Gastrocnemius medialis (tissue), 4 donors: ENCODE measurements at regions of chr14 and their contacts with region 1.

Region 1: DNA sequence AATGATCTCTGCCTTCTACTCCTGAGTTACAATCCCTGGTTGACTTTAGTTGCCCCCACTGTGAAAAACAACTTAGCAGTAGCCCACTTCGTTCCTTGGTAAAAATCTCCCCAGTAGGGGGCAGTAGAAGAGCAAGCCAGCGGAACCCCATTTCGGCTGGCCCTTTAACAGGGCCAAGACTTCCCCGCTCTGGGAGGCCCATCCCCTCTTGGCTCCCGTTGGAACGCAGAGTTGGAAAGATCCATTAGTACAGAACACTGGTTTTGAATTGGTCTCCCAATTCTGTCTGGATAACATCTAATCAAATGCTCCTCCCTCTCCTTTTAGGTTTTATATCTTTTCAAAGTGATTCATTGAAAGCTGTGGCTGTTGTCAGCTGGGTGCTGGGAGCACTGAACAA is 1133.3 kb downstream of the BCL11B start:
- DNase-seq: no peak
- ATAC-seq: no peak
- H3K4me3 ChIP-seq: no peak overlapping the region
- H3K27ac ChIP-seq: no peak overlapping the region
- H3K4me1 ChIP-seq: no peaks in the 10 kb centered on the region
- H3K27me3 ChIP-seq: peaks cover 0 to 18% (median 0%) of the 10 kb centered on the region in 3 donors
- CTCF ChIP-seq: peak in 1 of 5 experiments; percentile 35
- POLR2A ChIP-seq: no peak

Region 2: GRCh38 chr14:98059106-98059505 is 79.6 kb before region 1 on chr14:
- in situ Hi-C with region 1: no loop called
- intact Hi-C with region 1: no loop called
- DNase-seq: no peak
- ATAC-seq: no peak
- H3K4me3 ChIP-seq: no peak overlapping the region
- H3K27ac ChIP-seq: no peak overlapping the region
- H3K4me1 ChIP-seq: no peaks in the 10 kb centered on the region
- H3K27me3 ChIP-seq: no peaks in the 10 kb centered on the region
- CTCF ChIP-seq: no peak
- POLR2A ChIP-seq: no peak

Region 3: GRCh38 chr14:98198385-98198784 is 59.7 kb after region 1 on chr14:
- in situ Hi-C with region 1: no loop called
- intact Hi-C with region 1: no loop called
- DNase-seq: no peak
- ATAC-seq: no peak
- H3K4me3 ChIP-seq: no peak overlapping the region
- H3K27ac ChIP-seq: no peak overlapping the region
- H3K4me1 ChIP-seq: no peaks in the 10 kb centered on the region
- H3K27me3 ChIP-seq: no peaks in the 10 kb centered on the region
- CTCF ChIP-seq: no peak
- POLR2A ChIP-seq: no peak

Region 4: DNA sequence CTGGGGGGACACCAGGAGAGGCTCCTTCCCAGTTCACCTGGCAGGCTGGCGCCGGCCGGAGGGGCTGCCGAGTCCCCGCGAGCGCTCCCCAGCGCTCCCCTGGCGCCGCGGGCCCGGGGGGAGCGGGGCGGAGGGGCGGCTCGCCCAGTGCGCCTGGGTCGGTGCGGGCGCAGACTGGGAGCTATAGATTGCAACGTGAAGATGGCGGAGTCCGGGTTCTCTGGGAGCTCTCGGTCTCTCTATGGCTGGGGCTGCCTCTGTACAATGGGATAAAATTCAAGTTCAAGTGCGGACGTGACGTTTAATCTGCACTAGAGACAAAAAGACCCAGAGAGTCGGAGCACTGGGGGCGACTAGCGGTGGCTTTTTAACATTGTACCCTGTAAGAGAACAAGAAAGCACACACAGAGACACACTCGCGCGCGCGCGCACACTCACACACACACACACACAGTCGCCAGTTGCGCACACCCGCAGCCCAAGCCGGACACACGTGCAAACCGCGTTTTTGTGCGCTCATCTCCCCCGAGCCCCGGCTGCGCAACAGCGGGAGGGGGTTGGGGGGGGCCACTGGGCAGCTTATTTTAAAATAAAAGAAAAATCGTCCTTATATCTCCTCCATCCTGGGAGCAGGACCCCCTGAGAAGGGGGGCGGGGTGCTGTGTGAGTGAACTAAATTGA is 1133.4 kb after region 1 on chr14 and contains the start of gene BCL11B:
- in situ Hi-C with region 1: loop called in 1 of 4 experiments (anchors 25 kb)
- intact Hi-C with region 1: no loop called
- DNase-seq: no peak
- ATAC-seq: no peak
- H3K4me3 ChIP-seq: peak within 1 kb of the TSS in 3 of 4 donors; percentile 33 to 39 (median 34)
- H3K27ac ChIP-seq: no peak within 1 kb of the TSS
- H3K4me1 ChIP-seq: peaks cover 19 to 30% of the 10 kb centered on the region in 2 donors
- H3K27me3 ChIP-seq: peaks cover 83 to 89% (median 88%) of the 10 kb centered on the region in 3 donors
- CTCF ChIP-seq: peak in 2 of 5 experiments; percentile 10
- POLR2A ChIP-seq: no peak
- total RNA-seq, gene BCL11B: 0.05 to 0.62 (median 0.18) TPM in 3 of 4 donors, not detected in the other